ENCODE measurements at regions of chr19 and their contacts with region 1.

Region 1: DNA sequence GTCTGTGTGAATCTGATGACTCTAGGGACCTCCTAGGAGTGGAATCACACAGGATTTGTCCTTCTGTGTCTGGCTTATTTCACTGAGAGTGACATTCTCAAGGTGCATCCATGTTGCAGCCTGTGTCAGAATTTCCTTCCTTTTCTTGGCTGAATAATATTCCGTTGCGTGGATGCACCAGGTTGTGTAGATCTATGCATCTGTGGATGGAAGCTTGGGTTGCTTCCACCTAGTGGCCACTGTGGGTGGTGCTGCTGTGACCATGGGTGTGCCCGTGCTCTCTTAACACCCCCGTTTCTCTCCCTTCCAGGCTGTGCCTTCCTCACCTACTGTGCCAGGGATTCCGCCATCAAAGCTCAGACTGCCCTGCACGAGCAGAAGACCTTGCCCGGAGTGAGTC is 26.2 kb downstream of the CELF5 start:
- DNase-seq: peak; percentile 69
- ATAC-seq: peak; percentile 83
- H3K4me3 Mint-ChIP-seq: no peak overlapping the region
- H3K27ac Mint-ChIP-seq: no peak overlapping the region
- H3K4me1 Mint-ChIP-seq: no peaks in the 10 kb centered on the region
- H3K27me3 Mint-ChIP-seq: peaks cover 18% of the 10 kb centered on the region

Region 2: DNA sequence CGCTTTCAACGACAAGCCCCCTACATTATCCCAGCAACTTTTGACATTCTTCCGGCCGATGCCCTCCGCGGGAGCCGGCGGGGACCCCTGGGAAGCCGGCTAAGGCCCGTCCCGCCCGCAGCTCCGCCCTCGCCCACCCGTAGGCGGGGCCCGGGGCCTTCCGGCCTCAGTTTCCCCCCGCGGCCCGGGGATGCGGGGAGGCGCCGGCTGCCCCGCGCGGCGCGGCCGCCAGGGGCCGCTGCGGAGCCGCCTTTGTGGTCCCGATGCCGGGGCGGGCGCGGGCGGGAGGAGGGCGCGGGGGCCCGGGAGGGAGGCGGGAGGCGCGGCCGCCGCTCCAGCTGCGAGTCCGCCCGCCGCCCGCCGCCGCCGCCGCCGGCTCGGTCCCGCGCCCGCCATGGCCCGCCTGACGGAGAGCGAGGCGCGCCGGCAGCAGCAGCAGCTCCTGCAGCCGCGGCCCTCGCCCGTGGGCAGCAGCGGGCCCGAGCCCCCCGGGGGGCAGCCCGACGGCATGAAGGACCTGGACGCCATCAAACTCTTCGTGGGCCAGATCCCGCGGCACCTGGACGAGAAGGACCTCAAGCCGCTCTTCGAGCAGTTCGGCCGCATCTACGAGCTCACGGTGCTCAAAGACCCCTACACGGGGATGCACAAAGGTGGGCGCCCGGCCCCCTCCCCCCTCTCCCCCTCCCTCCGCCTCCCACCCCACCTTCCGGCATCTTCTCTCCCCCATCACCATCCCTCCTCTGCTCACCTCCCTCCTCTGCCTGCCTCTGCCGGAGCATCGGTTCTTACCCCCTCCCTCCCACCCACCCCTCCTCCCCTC is 26.1 kb before region 1 on chr19 and contains the start of gene CELF5:
- CTCF ChIA-PET with region 1: interaction called, 5 read pairs
- POLR2A ChIA-PET with region 1: no interaction called
- intact Hi-C with region 1: loop called in 1 of 2 experiments (anchors 1 kb)
- DNase-seq: peak; percentile 77
- ATAC-seq: peak; percentile 77
- H3K4me3 Mint-ChIP-seq: no peak within 1 kb of the TSS
- H3K27ac Mint-ChIP-seq: no peak within 1 kb of the TSS
- H3K4me1 Mint-ChIP-seq: no peaks in the 10 kb centered on the region
- H3K27me3 Mint-ChIP-seq: peaks cover 24% of the 10 kb centered on the region
- total RNA-seq, gene CELF5: 0.18 to 0.21 TPM